K562 (cell line): ENCODE measurements at regions of chr19 and their contacts with region 1.

Region 1: GRCh38 chr19:48646001-48646721 is at the start of gene CA11:
- DNase-seq: peak; percentile 71 to 93 (median 92)
- ATAC-seq: peak; percentile 91
- H3K4me3 ChIP-seq: peak within 1 kb of the TSS; percentile 56
- H3K27ac ChIP-seq: peak within 1 kb of the TSS; percentile 27
- H3K4me1 ChIP-seq: peaks cover 19 to 41% of the 10 kb centered on the region in 2 experiments; a peak in 4 of 5 replicates
- H3K27me3 ChIP-seq: no peaks in the 10 kb centered on the region
- CTCF ChIP-seq: peak; percentile 75 to 96 (median 95)
- EP300 ChIP-seq: no peak
- POLR2A ChIP-seq: peak; percentile 48; the same call in 1 of the 2 replicates
- RAD21 ChIP-seq: peak; percentile 89 to 95
- polyA plus RNA-seq, gene CA11: 6.3 to 11.5 TPM

Region 2: GRCh38 chr19:48668332-48668731 is 22.2 kb after region 1 on chr19:
- CTCF ChIA-PET with region 1: no interaction called
- POLR2A ChIA-PET with region 1: no interaction called
- in situ Hi-C with region 1: no loop called
- intact Hi-C with region 1: no loop called
- DNase-seq: no peak
- ATAC-seq: no peak
- H3K4me3 ChIP-seq: no peak overlapping the region
- H3K27ac ChIP-seq: no peak overlapping the region
- H3K4me1 ChIP-seq: peaks cover under 1 to 21% of the 10 kb centered on the region in 2 experiments; a peak in 2 of 5 replicates
- H3K27me3 ChIP-seq: no peaks in the 10 kb centered on the region
- CTCF ChIP-seq: no peak
- EP300 ChIP-seq: no peak
- POLR2A ChIP-seq: no peak
- RAD21 ChIP-seq: no peak

Region 3: DNA sequence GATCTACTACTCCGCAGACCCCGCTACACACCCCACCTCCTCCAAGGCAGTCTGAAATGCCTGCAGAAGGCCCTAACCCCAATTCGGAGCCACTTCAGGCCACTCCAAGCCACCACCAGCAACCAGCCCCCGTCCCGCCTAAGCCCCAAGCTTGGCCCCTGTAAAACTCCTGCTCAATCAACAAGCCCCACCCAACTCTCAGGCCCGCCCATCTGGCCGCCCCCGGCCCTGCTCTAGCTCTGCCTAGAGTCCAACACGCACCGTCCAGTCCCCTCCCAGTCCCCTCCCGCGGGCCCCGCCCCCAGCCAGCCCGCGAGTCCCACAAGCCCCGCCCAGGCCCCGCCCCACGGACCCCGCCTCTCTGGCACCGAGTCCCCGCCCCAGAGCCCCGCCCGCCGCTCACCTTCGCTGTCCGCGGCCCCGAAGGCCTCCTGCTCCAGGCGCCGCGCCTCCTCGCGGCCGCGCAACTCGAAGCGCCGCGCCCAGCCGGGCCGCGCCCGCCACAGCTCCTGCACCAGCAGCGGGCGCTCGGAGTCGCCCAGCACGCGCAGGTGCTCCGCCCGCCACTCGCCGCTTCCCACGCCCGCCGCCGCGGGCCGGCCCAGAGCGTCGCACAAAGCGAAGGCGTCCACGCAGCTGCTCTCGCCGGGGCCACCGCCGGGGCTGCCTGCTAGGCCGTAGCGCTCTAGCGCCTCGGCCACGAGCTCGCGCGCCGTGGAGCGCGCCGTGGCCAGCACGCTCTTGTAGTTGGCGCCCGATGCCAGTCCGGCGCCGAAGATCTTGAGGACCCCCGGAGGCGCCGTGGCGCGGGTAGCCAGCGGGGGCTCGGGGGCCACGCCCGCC is 92.6 kb after region 1 on chr19:
- CTCF ChIA-PET with region 1: interaction called, 5 read pairs
- POLR2A ChIA-PET with region 1: interaction called, 3 read pairs
- in situ Hi-C with region 1: loop called (anchors 5 kb)
- intact Hi-C with region 1: loop called (anchors 5 kb)
- DNase-seq: peak; percentile 97 to 99 (median 98)
- ATAC-seq: peak; percentile 86
- H3K4me3 ChIP-seq: peak overlapping the region; percentile 53
- H3K27ac ChIP-seq: peak overlapping the region; percentile 83
- H3K4me1 ChIP-seq: peaks cover 43 to 56% of the 10 kb centered on the region in 2 experiments
- H3K27me3 ChIP-seq: no peaks in the 10 kb centered on the region
- CTCF ChIP-seq: peak in 2 of 3 experiments; percentile 88 to 98; a peak in 5 of 6 replicates
- EP300 ChIP-seq: peak; percentile 29; the same call in 1 of the 2 replicates
- POLR2A ChIP-seq: peak; percentile 77
- RAD21 ChIP-seq: peak; percentile 81 to 91

Region 4: GRCh38 chr19:48835734-48836088 is 189.6 kb after region 1 on chr19:
- CTCF ChIA-PET with region 1: interaction called, 6 read pairs
- POLR2A ChIA-PET with region 1: no interaction called
- in situ Hi-C with region 1: loop called (anchors 5 kb)
- intact Hi-C with region 1: loop called (anchors 2 kb)
- DNase-seq: peak; percentile 86 to 95 (median 88)
- ATAC-seq: peak; percentile 100
- H3K4me3 ChIP-seq: no peak overlapping the region
- H3K27ac ChIP-seq: peak overlapping the region; percentile 82
- H3K4me1 ChIP-seq: peaks cover 11 to 35% of the 10 kb centered on the region in 2 experiments
- H3K27me3 ChIP-seq: no peaks in the 10 kb centered on the region
- CTCF ChIP-seq: peak; percentile 94 to 97 (median 96)
- EP300 ChIP-seq: peak; percentile 37; the same call in 1 of the 2 replicates
- POLR2A ChIP-seq: no peak
- RAD21 ChIP-seq: peak; percentile 87 to 96

Region 5: GRCh38 chr19:48970923-48971395 is 324.8 kb after region 1 on chr19:
- CTCF ChIA-PET with region 1: no interaction called
- POLR2A ChIA-PET with region 1: no interaction called
- in situ Hi-C with region 1: loop called (anchors 10 kb)
- intact Hi-C with region 1: no loop called
- DNase-seq: peak; percentile 75 to 93 (median 80)
- ATAC-seq: peak; percentile 66
- H3K4me3 ChIP-seq: no peak overlapping the region
- H3K27ac ChIP-seq: peak overlapping the region; percentile 42; the same call in 2 of the 3 replicates
- H3K4me1 ChIP-seq: peaks cover 26 to 34% of the 10 kb centered on the region in 2 experiments
- H3K27me3 ChIP-seq: no peaks in the 10 kb centered on the region
- CTCF ChIP-seq: peak; percentile 94 to 98 (median 97)
- EP300 ChIP-seq: no peak
- POLR2A ChIP-seq: no peak
- RAD21 ChIP-seq: peak; percentile 92 to 96

Region 6: GRCh38 chr19:49014123-49014869 is 368.1 kb after region 1 on chr19:
- CTCF ChIA-PET with region 1: no interaction called
- POLR2A ChIA-PET with region 1: no interaction called
- in situ Hi-C with region 1: no loop called
- intact Hi-C with region 1: no loop called
- DNase-seq: peak in 2 of 4 experiments; percentile 45 to 66
- ATAC-seq: peak; percentile 5; the same call in 1 of the 3 replicates
- H3K4me3 ChIP-seq: no peak overlapping the region
- H3K27ac ChIP-seq: peak overlapping the region; percentile 12; the same call in 2 of the 3 replicates
- H3K4me1 ChIP-seq: peaks cover 15 to 47% of the 10 kb centered on the region in 2 experiments; a peak in 4 of 5 replicates
- H3K27me3 ChIP-seq: no peaks in the 10 kb centered on the region
- CTCF ChIP-seq: no peak
- EP300 ChIP-seq: no peak
- POLR2A ChIP-seq: 0 out of 2 replicates have a peak, but pooled peaks have one; percentile 29
- RAD21 ChIP-seq: no peak